ENCODE measurements at regions of chr11 and their contacts with region 1.

Region 1: GRCh38 chr11:114439229-114440120 is at the start of gene REXO2:
- DNase-seq: peak; percentile 82 to 97
- H3K4me3 ChIP-seq: peak within 1 kb of the TSS; percentile 81 to 98
- H3K27ac ChIP-seq: peak within 1 kb of the TSS; percentile 78 to 91
- H3K4me1 ChIP-seq: peaks cover 0 to 17% of the 10 kb centered on the region in 2 donors
- H3K27me3 ChIP-seq: no peaks in the 10 kb centered on the region
- CTCF ChIP-seq: peak; percentile 2 to 45 (median 34)
- total RNA-seq, gene REXO2: 134 TPM

Region 2: GRCh38 chr11:114280696-114281095 is 158.8 kb before region 1 on chr11:
- intact Hi-C with region 1: loop called (anchors 5 kb)
- DNase-seq: peak in 1 of 2 donors; percentile 84
- H3K4me3 ChIP-seq: no peak overlapping the region
- H3K27ac ChIP-seq: peak overlapping the region; percentile 61 to 68
- H3K4me1 ChIP-seq: peaks cover 0 to 10% of the 10 kb centered on the region in 2 donors
- H3K27me3 ChIP-seq: no peaks in the 10 kb centered on the region
- CTCF ChIP-seq: peak; percentile 15 to 64 (median 53)

Region 3: DNA sequence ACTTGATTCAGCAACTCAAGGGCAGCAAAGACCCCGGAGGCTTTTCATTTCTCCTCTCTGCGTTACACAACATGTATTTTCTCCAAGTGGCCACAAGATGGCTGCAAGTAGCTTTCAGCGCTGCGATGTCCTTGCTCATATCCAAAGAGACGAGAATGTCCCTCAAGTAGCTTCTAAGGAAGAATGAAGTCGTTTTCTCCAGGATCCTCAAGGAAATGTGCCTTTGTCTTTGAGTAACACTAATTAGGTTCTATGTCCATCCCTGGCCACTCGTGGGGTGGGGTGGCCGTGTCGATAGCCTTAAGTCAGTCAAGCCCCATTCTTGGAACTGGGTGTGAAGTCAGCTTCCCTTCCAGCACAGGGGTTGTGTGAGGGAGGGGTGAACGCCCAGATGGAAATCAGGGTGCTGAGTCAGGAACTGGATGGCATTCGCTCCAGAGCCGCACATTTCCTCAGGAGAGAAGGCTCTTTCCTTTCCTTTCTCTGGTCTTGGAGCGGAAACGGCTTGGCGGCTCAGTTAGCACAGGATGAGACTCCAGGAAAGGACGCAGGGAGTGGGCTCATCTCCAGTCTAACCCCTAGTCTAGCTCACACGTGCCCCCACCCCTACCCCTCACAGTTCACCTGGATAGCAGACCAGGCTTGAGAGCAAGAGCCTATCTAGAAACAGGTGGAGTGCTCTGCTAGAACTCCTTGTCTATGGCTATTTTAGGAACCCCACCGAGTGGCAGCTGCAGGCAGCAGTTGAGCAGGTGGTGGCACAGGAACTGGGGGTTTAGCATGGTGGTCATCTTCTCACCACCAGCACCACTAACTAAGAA is 99.0 kb before region 1 on chr11:
- intact Hi-C with region 1: loop called (anchors 5 kb)
- DNase-seq: peak in 1 of 2 donors; percentile 79
- H3K4me3 ChIP-seq: peak overlapping the region; percentile 31 to 53
- H3K27ac ChIP-seq: peak overlapping the region; percentile 27 to 53
- H3K4me1 ChIP-seq: peaks cover 0 to 5% of the 10 kb centered on the region in 2 donors
- H3K27me3 ChIP-seq: no peaks in the 10 kb centered on the region
- CTCF ChIP-seq: peak; percentile 72 to 83 (median 78)

Region 4: GRCh38 chr11:114478768-114479167 is 39.3 kb after region 1 on chr11:
- intact Hi-C with region 1: no loop called
- DNase-seq: no peak
- H3K4me3 ChIP-seq: no peak overlapping the region
- H3K27ac ChIP-seq: no peak overlapping the region
- H3K4me1 ChIP-seq: no peaks in the 10 kb centered on the region
- H3K27me3 ChIP-seq: no peaks in the 10 kb centered on the region
- CTCF ChIP-seq: no peak

Region 5: GRCh38 chr11:114622858-114623257 is 183.4 kb after region 1 on chr11:
- intact Hi-C with region 1: no loop called
- DNase-seq: no peak
- H3K4me3 ChIP-seq: no peak overlapping the region
- H3K27ac ChIP-seq: no peak overlapping the region
- H3K4me1 ChIP-seq: no peaks in the 10 kb centered on the region
- H3K27me3 ChIP-seq: no peaks in the 10 kb centered on the region
- CTCF ChIP-seq: no peak